ENCODE measurements at regions of chr14 and their contacts with region 1.

Region 1: GRCh38 chr14:100192672-100193416 is 33.4 kb upstream of the DEGS2 start:
- DNase-seq: peak; percentile 100
- ATAC-seq: peak; percentile 99
- H3K4me3 Mint-ChIP-seq: peak overlapping the region; percentile 69
- H3K27ac Mint-ChIP-seq: peak overlapping the region; percentile 94
- H3K4me1 Mint-ChIP-seq: peaks cover 11% of the 10 kb centered on the region
- H3K27me3 Mint-ChIP-seq: no peaks in the 10 kb centered on the region
- CTCF ChIP-seq: peak; percentile 84

Region 2: DNA sequence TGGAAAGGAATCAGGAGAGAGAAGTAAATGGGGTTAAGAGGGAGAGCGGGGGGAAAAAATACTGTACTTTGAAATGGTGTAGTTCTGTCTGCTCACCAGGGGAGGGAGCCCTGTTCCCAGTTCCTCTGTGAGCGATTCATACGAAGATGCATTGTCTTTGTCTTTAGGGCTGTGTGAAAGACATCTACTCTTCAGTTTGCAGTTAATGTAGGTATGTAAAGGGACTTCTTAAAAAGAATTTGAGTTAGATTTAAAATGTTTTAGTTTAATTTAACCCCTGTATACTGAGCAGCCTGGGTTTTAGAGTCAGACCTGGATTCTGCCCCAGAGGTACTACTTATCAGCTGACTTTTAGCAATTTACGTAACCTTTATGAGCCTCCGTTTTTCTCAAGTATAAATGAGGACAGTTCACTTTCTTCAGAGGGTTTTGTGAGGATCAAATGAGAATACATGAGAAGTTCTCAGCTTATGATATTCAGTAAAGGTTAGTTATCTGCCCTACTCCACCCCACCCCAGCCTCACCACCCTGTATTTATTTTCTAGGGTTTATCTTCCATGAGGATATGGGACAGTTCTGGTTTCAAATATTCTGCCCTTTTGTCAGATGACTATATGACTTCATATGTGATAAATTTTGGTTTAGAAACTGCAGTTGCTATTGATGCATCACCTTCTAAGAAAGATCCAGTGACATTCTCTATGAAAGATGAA is 210.2 kb before region 1 on chr14:
- CTCF ChIA-PET with region 1: interaction called, 36 read pairs
- POLR2A ChIA-PET with region 1: no interaction called
- intact Hi-C with region 1: loop called (anchors 5 kb)
- DNase-seq: peak; percentile 68
- ATAC-seq: peak; percentile 100
- H3K4me3 Mint-ChIP-seq: no peak overlapping the region
- H3K27ac Mint-ChIP-seq: no peak overlapping the region
- H3K4me1 Mint-ChIP-seq: peaks cover 16% of the 10 kb centered on the region
- H3K27me3 Mint-ChIP-seq: no peaks in the 10 kb centered on the region
- CTCF ChIP-seq: peak; percentile 96

Region 3: DNA sequence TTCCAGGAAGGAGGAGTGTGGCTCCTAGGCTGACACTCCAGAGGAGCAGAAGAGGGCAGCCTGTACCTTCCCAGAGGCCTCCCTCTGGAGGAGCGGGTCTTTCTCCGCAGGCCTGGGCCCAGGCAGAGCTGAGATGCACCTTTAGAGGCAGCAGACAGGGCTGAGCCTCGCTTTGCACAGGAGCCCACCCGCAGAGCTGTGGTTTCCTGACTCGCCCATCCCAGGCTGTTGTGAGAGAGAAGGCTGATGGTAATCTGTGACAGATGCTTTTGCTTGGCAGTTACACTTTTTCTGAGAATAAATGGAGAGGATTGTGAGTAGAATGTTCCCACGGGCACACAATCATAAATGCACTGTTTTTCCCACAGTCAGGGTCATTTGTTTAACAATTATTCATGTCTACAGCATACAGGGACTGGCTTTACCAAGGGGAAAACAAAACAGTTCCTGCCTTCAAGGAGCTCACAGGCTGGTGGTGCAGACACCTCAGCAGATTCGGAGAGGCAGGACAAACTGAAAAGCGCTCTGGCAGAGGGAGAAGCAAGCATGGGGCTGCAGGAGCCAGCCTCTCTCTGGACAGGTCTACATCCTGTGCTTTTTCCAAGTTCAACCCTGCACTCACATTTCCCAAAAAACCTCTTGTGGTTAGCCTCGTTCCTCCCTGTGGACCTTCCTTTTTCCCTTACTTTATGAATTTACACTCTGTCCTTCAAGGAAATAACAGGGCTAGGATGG is 113.7 kb before region 1 on chr14:
- CTCF ChIA-PET with region 1: interaction called, 11 read pairs
- POLR2A ChIA-PET with region 1: no interaction called
- intact Hi-C with region 1: no loop called
- DNase-seq: peak; percentile 93
- ATAC-seq: peak; percentile 70
- H3K4me3 Mint-ChIP-seq: peak overlapping the region; percentile 72
- H3K27ac Mint-ChIP-seq: peak overlapping the region; percentile 99
- H3K4me1 Mint-ChIP-seq: peaks cover 95% of the 10 kb centered on the region
- H3K27me3 Mint-ChIP-seq: no peaks in the 10 kb centered on the region
- CTCF ChIP-seq: peak; percentile 27

Region 4: GRCh38 chr14:100147181-100147631 is 45.6 kb before region 1 on chr14:
- CTCF ChIA-PET with region 1: interaction called, 16 read pairs
- POLR2A ChIA-PET with region 1: no interaction called
- intact Hi-C with region 1: no loop called
- DNase-seq: peak; percentile 83
- ATAC-seq: peak; percentile 78
- H3K4me3 Mint-ChIP-seq: peak overlapping the region; percentile 48
- H3K27ac Mint-ChIP-seq: peak overlapping the region; percentile 83
- H3K4me1 Mint-ChIP-seq: peaks cover 16% of the 10 kb centered on the region
- H3K27me3 Mint-ChIP-seq: no peaks in the 10 kb centered on the region
- CTCF ChIP-seq: no peak

Region 5: GRCh38 chr14:100203949-100204834 is 11.3 kb after region 1 on chr14:
- CTCF ChIA-PET with region 1: interaction called, 37 read pairs
- POLR2A ChIA-PET with region 1: interaction called, 3 read pairs
- intact Hi-C with region 1: no loop called
- DNase-seq: no peak
- ATAC-seq: no peak
- H3K4me3 Mint-ChIP-seq: no peak overlapping the region
- H3K27ac Mint-ChIP-seq: no peak overlapping the region
- H3K4me1 Mint-ChIP-seq: no peaks in the 10 kb centered on the region
- H3K27me3 Mint-ChIP-seq: no peaks in the 10 kb centered on the region
- CTCF ChIP-seq: no peak

Region 6: DNA sequence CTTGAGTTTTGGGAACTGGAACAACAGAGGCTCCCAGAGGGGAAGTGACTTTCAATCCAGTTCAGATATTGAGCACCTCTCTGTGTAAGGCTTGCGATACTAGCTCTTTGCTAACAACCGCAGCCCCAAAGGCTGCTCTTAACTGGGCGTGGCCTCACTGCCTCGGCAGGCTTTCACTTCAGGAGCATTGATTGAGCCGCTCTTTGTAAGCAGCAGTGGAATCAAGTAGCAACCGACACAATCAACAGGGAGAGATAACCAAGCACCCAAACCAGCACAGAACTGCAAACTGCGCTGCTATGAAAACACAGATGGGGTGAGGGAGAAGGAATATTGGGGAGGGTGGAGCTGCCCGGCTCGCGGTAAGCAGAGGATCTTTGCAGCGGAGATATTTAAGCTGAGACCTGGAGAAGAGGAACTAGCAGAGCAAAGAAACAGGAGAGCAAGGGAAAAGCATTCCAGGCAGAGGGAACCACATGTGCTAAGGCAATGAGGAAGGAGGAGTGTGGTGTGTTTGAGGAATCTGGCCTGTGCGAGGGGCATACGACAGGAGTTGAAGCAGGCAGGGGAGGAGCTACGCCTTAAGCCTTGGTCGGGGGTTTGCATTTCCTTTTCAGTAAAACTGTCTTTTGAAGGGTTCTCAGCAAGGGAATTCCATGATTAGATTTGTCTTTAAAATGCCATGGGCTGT is 28.8 kb after region 1 on chr14:
- CTCF ChIA-PET with region 1: interaction called, 42 read pairs
- POLR2A ChIA-PET with region 1: interaction called, 5 read pairs
- intact Hi-C with region 1: no loop called
- DNase-seq: peak; percentile 84
- ATAC-seq: peak; percentile 91
- H3K4me3 Mint-ChIP-seq: no peak overlapping the region
- H3K27ac Mint-ChIP-seq: no peak overlapping the region
- H3K4me1 Mint-ChIP-seq: peaks cover 5% of the 10 kb centered on the region
- H3K27me3 Mint-ChIP-seq: no peaks in the 10 kb centered on the region
- CTCF ChIP-seq: no peak